ENCODE measurements at regions of chr11 and their contacts with region 1.

Region 1: GRCh38 chr11:66480117-66480938 is at the start of gene DPP3:
- DNase-seq: peak; percentile 92 to 97 (median 95)
- ATAC-seq: peak; percentile 98 to 99
- H3K4me3 Mint-ChIP-seq: peak within 1 kb of the TSS; percentile 86 to 94 (median 92)
- H3K27ac Mint-ChIP-seq: peak within 1 kb of the TSS; percentile 80 to 96 (median 92)
- H3K4me1 Mint-ChIP-seq: peaks cover 17 to 34% (median 30%) of the 10 kb centered on the region in 4 donors
- H3K27me3 Mint-ChIP-seq: no peaks in the 10 kb centered on the region
- polyA plus RNA-seq, gene DPP3: 20.0 to 25.4 (median 20.5) TPM

Region 2: GRCh38 chr11:66311965-66312548 is 168.3 kb before region 1 on chr11:
- POLR2A ChIA-PET with region 1: no interaction called
- DNase-seq: peak; percentile 95 to 100 (median 100)
- ATAC-seq: peak; percentile 70 to 76
- H3K4me3 Mint-ChIP-seq: peak overlapping the region; percentile 73 to 99 (median 96)
- H3K27ac Mint-ChIP-seq: peak overlapping the region; percentile 92 to 100 (median 99)
- H3K4me1 Mint-ChIP-seq: peaks cover 16 to 28% (median 20%) of the 10 kb centered on the region in 4 donors
- H3K27me3 Mint-ChIP-seq: no peaks in the 10 kb centered on the region

Region 3: GRCh38 chr11:66414120-66414934 is 66.0 kb before region 1 on chr11:
- POLR2A ChIA-PET with region 1: no interaction called
- DNase-seq: no peak
- ATAC-seq: no peak
- H3K4me3 Mint-ChIP-seq: no peak overlapping the region
- H3K27ac Mint-ChIP-seq: no peak overlapping the region
- H3K4me1 Mint-ChIP-seq: peaks cover 0 to 13% (median 6%) of the 10 kb centered on the region in 4 donors
- H3K27me3 Mint-ChIP-seq: peaks cover 40 to 85% (median 66%) of the 10 kb centered on the region in 5 donors

Region 4: DNA sequence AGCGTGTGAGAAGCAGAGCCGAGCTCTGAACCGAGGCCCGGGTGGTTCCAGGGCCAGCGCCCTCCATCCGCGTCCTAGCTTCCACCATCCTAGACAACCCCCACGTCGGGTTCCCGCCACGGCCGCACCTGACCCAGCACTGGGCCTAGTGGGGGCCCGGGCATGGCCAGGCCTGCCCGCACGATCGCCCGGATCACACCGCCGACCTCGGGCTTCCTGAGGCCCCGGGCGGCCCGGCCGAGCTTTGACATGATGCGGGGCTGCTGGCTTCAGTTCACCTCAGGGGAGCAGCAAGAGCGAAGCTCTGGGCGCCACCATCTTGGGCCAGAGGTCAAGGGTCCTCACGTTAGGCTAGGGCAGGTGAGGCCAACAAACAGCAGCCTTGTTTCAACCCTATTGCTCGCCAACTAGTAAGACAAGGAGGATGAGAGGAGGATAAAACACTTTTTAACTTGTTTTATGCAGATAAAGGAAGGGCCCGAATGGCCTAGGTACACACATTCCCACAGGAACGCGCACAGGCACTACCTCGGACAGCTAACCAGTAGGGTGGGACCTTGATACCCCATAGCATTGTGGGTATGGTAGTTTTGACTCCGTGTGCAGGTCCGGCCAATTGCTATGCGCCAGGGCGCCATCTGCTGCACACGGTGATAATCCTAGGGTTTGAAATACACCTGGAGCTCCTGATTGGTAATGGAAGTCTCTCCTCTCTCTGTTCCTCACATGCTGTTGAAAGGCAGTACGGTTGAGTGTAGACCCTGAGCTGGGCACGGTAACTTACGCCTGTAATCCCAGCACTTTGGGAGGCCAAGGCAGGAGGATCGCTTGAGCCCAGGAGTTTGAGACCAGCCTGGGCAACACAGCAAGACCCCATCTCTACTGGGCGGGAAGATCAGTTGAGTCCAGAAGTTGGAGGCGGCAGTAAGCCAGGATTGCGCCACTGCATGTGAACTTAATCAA is 41.5 kb before region 1 on chr11 and contains the start of gene MRPL11:
- POLR2A ChIA-PET with region 1: interaction called, 10 read pairs
- DNase-seq: peak; percentile 74 to 95 (median 88)
- ATAC-seq: peak; percentile 96 to 98
- H3K4me3 Mint-ChIP-seq: peak within 1 kb of the TSS; percentile 87 to 96 (median 92)
- H3K27ac Mint-ChIP-seq: peak within 1 kb of the TSS; percentile 24 to 99 (median 98)
- H3K4me1 Mint-ChIP-seq: peaks cover 5 to 16% (median 9%) of the 10 kb centered on the region in 4 donors
- H3K27me3 Mint-ChIP-seq: peaks cover 0 to 6% (median 0%) of the 10 kb centered on the region in 5 donors
- polyA plus RNA-seq, gene MRPL11: 86.9 to 98.2 (median 87.9) TPM

Region 5: DNA sequence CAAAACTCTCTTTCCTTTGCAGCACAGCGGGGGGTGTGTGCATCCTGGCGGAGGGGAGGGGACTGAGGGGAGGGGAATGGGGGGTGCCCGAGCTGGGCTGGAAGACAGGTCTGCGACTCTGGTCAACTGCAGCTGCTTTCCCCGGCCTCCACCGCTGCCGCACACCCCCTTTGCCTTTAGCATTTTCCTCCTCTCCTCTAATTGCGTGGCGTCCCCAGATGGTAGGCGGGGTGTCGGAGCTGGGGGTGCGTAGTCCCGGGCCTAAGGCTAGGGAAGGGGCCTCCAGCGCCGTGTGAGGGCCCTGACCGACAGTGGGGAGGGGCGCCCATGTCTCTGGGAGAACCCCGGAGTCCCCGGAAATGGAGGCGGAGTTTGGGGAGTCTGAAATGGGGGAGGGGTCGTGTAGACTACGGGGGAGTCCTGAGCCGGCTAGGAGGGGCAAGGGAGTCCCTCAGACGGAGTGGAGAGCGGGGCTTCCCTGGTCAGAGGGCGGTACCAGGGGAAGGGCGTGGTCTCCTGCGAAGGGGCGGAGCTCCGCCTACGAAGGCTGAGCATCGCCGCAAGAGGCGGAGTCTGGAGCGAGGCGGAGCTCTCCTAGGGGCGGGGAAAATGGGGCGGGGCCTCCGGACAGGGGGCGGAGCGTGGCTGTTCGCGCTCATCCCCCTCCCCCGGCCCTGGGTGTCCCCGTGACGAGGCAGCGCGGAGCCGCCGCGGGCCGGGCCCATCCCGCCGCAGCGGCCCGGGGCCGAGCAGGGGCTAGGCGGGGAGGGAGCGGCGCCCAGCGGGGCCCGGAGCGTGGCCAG is 13.9 kb before region 1 on chr11 and contains the start of gene PELI3:
- POLR2A ChIA-PET with region 1: interaction called, 46 read pairs
- DNase-seq: peak; percentile 87 to 97 (median 94)
- ATAC-seq: peak; percentile 85 to 91
- H3K4me3 Mint-ChIP-seq: peak within 1 kb of the TSS; percentile 86 to 93 (median 90)
- H3K27ac Mint-ChIP-seq: peak within 1 kb of the TSS; percentile 72 to 97 (median 94)
- H3K4me1 Mint-ChIP-seq: peaks cover 8 to 34% (median 19%) of the 10 kb centered on the region in 4 donors
- H3K27me3 Mint-ChIP-seq: no peaks in the 10 kb centered on the region
- polyA plus RNA-seq, gene PELI3: 2.7 to 4.1 (median 3.4) TPM

Region 6: GRCh38 chr11:66495401-66495844 is 15.1 kb after region 1 on chr11:
- POLR2A ChIA-PET with region 1: no interaction called
- DNase-seq: no peak
- ATAC-seq: no peak
- H3K4me3 Mint-ChIP-seq: no peak overlapping the region
- H3K27ac Mint-ChIP-seq: no peak overlapping the region
- H3K4me1 Mint-ChIP-seq: no peaks in the 10 kb centered on the region
- H3K27me3 Mint-ChIP-seq: no peaks in the 10 kb centered on the region